SK-N-SH (cell line): ENCODE measurements at regions of chr2 and their contacts with region 1.

Region 1: GRCh38 chr2:106566050-106566449 is 78.9 kb downstream of the CD8B2 start:
- DNase-seq: no peak
- H3K4me3 ChIP-seq: no peak overlapping the region
- H3K27ac ChIP-seq: no peak overlapping the region
- H3K4me1 ChIP-seq: peaks cover 0 to 28% of the 10 kb centered on the region in 2 experiments; a peak in 2 of 4 replicates
- H3K27me3 ChIP-seq: no peaks in the 10 kb centered on the region
- CTCF ChIP-seq: no peak
- EP300 ChIP-seq: no peak
- RAD21 ChIP-seq: no peak

Region 2: GRCh38 chr2:105969555-105969954 is 596.5 kb before region 1 on chr2:
- CTCF ChIA-PET with region 1: no interaction called
- POLR2A ChIA-PET with region 1: no interaction called
- DNase-seq: peak; percentile 23
- H3K4me3 ChIP-seq: no peak overlapping the region
- H3K27ac ChIP-seq: no peak overlapping the region
- H3K4me1 ChIP-seq: no peaks in the 10 kb centered on the region
- H3K27me3 ChIP-seq: no peaks in the 10 kb centered on the region
- CTCF ChIP-seq: peak; percentile 25; the same call in 1 of the 2 replicates
- EP300 ChIP-seq: no peak
- RAD21 ChIP-seq: peak; percentile 49

Region 3: GRCh38 chr2:106551417-106552130 is 14.5 kb before region 1 on chr2:
- CTCF ChIA-PET with region 1: interaction called, 35 read pairs
- POLR2A ChIA-PET with region 1: no interaction called
- DNase-seq: no peak
- H3K4me3 ChIP-seq: no peak overlapping the region
- H3K27ac ChIP-seq: no peak overlapping the region
- H3K4me1 ChIP-seq: peaks cover 0 to 5% of the 10 kb centered on the region in 2 experiments; a peak in 1 of 4 replicates
- H3K27me3 ChIP-seq: no peaks in the 10 kb centered on the region
- CTCF ChIP-seq: no peak
- EP300 ChIP-seq: no peak
- RAD21 ChIP-seq: no peak

Region 4: DNA sequence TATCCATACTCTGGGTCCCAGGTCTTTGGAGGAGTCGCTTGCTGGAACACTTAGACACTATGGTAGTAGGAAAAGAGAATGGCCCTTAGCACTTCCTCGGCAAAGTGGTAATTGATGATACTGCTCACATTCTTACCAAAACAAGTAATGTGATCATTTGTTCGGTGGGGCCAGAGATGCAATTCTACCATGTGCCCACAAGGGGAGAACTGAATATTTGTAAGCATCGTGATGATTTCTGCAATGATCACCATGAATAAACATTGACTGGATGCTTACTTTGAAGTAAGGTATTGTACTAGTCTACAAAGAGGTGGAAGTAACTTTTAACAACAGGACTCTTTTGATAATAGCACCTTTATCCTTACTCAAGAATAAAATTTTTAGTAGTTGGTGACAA is 30.8 kb after region 1 on chr2:
- CTCF ChIA-PET with region 1: interaction called, 16 read pairs
- POLR2A ChIA-PET with region 1: no interaction called
- DNase-seq: no peak
- H3K4me3 ChIP-seq: no peak overlapping the region
- H3K27ac ChIP-seq: no peak overlapping the region
- H3K4me1 ChIP-seq: no peaks in the 10 kb centered on the region
- H3K27me3 ChIP-seq: no peaks in the 10 kb centered on the region
- CTCF ChIP-seq: peak; percentile 51
- EP300 ChIP-seq: no peak
- RAD21 ChIP-seq: no peak